ENCODE measurements at regions of chr5 and their contacts with region 1.

Region 1: GRCh38 chr5:178551059-178551458 is 39.1 kb downstream of the COL23A1 start:
- DNase-seq: no peak
- ATAC-seq: no peak
- H3K4me3 ChIP-seq: no peak overlapping the region
- H3K4me1 ChIP-seq: no peaks in the 10 kb centered on the region
- CTCF ChIP-seq: no peak

Region 2: GRCh38 chr5:178207183-178207916 is 343.7 kb before region 1 on chr5:
- intact Hi-C with region 1: no loop called
- DNase-seq: peak; percentile 70 to 86 (median 71)
- ATAC-seq: peak; percentile 60
- H3K4me3 ChIP-seq: no peak overlapping the region
- H3K4me1 ChIP-seq: peaks cover 45% of the 10 kb centered on the region
- CTCF ChIP-seq: no peak

Region 3: GRCh38 chr5:178279725-178280438 is 271.2 kb before region 1 on chr5:
- intact Hi-C with region 1: loop called (anchors 10 kb)
- DNase-seq: peak; percentile 84 to 93 (median 90)
- ATAC-seq: peak; percentile 96
- H3K4me3 ChIP-seq: no peak overlapping the region
- H3K4me1 ChIP-seq: no peaks in the 10 kb centered on the region
- CTCF ChIP-seq: peak; percentile 87

Region 4: GRCh38 chr5:178449163-178450070 is 101.6 kb before region 1 on chr5:
- intact Hi-C with region 1: no loop called
- DNase-seq: no peak
- ATAC-seq: no peak
- H3K4me3 ChIP-seq: no peak overlapping the region
- H3K4me1 ChIP-seq: no peaks in the 10 kb centered on the region
- CTCF ChIP-seq: no peak

Measured in mucosa of descending colon (tissue), 3 donors.